WTC11 (cell line): ENCODE measurements at regions of chr9 and their contacts with region 1.

Region 1: DNA sequence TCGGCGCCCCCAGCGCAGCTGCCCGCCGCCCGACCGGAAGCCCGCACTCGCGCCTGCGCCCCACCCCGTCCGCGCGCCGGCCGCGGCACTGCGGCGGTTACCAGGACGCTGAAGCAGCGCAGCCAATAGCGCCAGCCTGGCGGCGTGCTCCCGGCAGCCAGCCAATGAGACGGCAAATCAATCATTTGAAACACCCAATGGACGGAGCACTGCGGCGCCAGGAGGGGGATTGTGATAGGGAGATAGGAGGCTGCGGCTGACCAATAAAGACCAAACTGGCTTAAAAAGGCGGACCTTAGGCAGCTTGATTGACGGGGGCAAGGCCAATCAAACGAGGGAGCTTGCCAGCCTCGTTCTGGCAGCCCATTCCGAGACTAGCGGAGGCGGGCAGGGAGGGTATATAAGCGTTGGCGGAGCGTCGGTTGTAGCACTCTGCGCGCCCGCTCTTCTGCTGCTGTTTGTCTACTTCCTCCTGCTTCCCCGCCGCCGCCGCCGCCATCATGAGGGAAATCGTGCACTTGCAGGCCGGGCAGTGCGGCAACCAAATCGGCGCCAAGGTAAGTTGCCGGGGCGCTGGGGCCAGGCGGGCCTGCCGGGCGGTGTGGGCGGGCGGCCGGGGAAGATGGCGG is at the start of gene TUBB4B:
- DNase-seq: peak; percentile 98
- ATAC-seq: peak; percentile 80
- H3K4me3 Mint-ChIP-seq: peak within 1 kb of the TSS; percentile 81
- H3K27ac Mint-ChIP-seq: peak within 1 kb of the TSS; percentile 87; the same call in 1 of the 2 replicates
- H3K4me1 Mint-ChIP-seq: peaks cover 39% of the 10 kb centered on the region
- H3K27me3 Mint-ChIP-seq: no peaks in the 10 kb centered on the region
- CTCF ChIP-seq: no peak
- total RNA-seq, gene TUBB4B: 373 to 376 TPM (median 375 TPM) in 3 replicates

Region 2: DNA sequence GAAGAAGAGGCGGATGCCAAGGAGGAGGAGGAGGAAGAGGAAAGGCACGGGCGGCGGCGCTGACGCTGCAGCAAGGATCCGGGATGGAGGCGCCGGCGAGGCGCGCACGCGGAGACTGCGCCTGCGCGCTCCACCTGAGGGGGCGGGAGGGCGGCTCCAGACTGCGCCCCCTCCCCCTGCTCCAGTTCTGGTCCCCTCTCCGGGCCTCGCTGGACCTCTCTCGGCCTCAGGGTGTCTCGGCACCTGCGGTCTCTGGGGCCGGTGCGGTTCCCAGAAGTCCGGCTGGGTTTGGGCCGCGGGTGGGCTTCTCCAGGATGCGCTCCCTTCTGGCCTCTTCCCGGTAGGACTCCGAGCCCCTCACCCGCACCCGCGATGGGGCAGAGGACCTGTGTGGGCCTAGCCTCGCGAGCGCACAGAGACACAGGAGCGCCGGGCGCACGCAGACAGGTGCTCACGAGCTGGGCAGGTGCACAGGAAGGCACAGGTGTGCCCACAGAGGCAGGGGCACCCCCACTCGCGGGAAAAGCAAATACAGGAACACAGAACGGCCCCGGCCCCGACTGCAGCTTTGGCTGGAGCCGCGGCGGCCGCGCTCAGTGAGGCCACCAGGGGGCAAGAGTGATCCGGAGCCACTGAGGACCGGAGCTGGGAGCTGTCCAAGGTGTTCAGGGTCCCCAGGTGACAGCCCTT is 194.7 kb before region 1 on chr9 and contains the start of gene NPDC1:
- CTCF ChIA-PET with region 1: interaction called, 17 read pairs
- POLR2A ChIA-PET with region 1: no interaction called
- DNase-seq: peak; percentile 94
- ATAC-seq: peak; percentile 69
- H3K4me3 Mint-ChIP-seq: peak within 1 kb of the TSS; percentile 77
- H3K27ac Mint-ChIP-seq: no peak within 1 kb of the TSS
- H3K4me1 Mint-ChIP-seq: peaks cover 10% of the 10 kb centered on the region
- H3K27me3 Mint-ChIP-seq: peaks cover 47% of the 10 kb centered on the region
- CTCF ChIP-seq: peak; percentile 83
- total RNA-seq, gene NPDC1: 64.3 to 68.8 TPM (median 64.5 TPM) in 3 replicates

Region 3: DNA sequence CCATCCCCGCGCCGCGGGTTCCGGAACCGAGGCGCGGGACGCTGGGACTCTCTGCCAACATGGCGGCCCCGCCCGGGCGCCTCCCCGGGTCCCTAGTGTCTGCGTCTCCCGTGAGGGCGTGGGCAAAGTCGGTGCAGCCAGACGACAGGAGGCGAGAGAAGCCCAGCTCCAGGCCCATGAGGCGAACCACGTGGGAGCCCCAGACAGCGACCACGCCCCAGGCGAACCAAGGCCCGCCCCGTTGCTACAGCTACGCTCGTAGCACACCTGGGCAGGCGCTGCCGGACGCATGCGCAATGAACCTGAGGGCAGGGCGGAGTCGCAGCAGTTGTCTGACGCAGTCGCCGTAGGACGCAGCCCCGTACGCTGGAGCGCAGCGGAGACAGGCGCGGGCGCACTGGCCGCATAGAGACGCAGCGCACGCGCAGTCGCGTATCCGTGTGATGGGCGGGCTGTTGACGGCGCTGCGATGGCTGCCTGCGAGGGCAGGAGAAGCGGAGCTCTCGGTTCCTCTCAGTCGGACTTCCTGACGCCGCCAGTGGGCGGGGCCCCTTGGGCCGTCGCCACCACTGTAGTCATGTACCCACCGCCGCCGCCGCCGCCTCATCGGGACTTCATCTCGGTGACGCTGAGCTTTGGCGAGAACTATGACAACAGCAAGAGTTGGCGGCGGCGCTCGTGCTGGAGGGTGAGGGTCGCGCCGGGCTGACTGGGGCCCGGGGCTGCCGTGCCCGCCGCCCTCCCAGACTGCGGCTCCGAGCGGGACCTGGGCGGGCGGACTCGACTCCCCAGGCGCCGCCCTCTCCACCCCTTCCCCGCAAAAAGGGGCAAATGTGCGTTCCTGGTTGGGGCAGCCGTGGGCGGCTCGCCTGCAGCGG is 154.2 kb before region 1 on chr9 and contains the start of gene MAN1B1:
- CTCF ChIA-PET with region 1: interaction called, 25 read pairs
- POLR2A ChIA-PET with region 1: interaction called, 5 read pairs
- DNase-seq: peak; percentile 99
- ATAC-seq: peak; percentile 95
- H3K4me3 Mint-ChIP-seq: peak within 1 kb of the TSS; percentile 85
- H3K27ac Mint-ChIP-seq: peak within 1 kb of the TSS; percentile 91
- H3K4me1 Mint-ChIP-seq: peaks cover 16% of the 10 kb centered on the region
- H3K27me3 Mint-ChIP-seq: peaks cover 9% of the 10 kb centered on the region
- CTCF ChIP-seq: no peak
- total RNA-seq, gene MAN1B1: 44.9 to 57.1 TPM (median 47.1 TPM) in 3 replicates

Region 4: DNA sequence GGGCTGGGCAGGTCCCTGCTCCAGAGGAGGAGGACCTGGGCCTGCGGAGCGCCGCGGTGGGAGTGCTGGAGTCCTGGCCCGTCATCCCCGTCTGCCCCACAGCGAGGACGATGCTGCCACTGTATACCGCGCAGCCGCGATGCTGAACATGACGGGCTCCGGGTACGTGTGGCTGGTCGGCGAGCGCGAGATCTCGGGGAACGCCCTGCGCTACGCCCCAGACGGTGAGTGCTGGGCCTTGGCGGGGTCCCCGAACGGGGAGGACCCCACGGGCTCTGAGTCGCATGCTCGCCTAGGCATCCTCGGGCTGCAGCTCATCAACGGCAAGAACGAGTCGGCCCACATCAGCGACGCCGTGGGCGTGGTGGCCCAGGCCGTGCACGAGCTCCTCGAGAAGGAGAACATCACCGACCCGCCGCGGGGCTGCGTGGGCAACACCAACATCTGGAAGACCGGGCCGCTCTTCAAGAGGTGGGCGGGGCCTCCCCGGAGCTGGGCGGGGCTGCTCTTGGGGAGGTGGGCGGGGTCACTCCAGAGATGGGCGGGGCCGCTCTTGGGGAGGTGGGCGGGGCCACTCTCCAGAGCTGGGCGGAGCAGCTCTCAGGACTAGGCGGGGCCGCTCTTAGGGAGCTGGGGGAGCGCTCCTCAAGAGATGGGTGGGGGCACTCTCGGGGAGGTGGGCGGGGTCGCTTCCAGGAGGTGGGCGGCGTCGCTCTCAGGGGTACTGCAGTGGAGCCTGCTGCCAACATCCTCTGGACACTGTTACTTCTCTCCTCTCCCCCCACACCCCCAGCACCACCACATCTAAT is 84.2 kb before region 1 on chr9:
- CTCF ChIA-PET with region 1: interaction called, 18 read pairs
- POLR2A ChIA-PET with region 1: no interaction called
- DNase-seq: peak; percentile 75
- ATAC-seq: peak; percentile 72
- H3K4me3 Mint-ChIP-seq: peak overlapping the region; percentile 64
- H3K27ac Mint-ChIP-seq: no peak overlapping the region
- H3K4me1 Mint-ChIP-seq: no peaks in the 10 kb centered on the region
- H3K27me3 Mint-ChIP-seq: peaks cover 66% of the 10 kb centered on the region
- CTCF ChIP-seq: no peak

Region 5: GRCh38 chr9:137176302-137177182 is 64.4 kb before region 1 on chr9:
- CTCF ChIA-PET with region 1: interaction called, 33 read pairs
- POLR2A ChIA-PET with region 1: no interaction called
- DNase-seq: peak; percentile 48
- ATAC-seq: peak; percentile 60
- H3K4me3 Mint-ChIP-seq: no peak overlapping the region
- H3K27ac Mint-ChIP-seq: peak overlapping the region; percentile 49
- H3K4me1 Mint-ChIP-seq: no peaks in the 10 kb centered on the region
- H3K27me3 Mint-ChIP-seq: peaks cover 5% of the 10 kb centered on the region
- CTCF ChIP-seq: peak; percentile 21; the same call in 1 of the 2 replicates

Region 6: GRCh38 chr9:137213160-137214060 is 27.6 kb before region 1 on chr9:
- CTCF ChIA-PET with region 1: interaction called, 10 read pairs
- POLR2A ChIA-PET with region 1: no interaction called
- DNase-seq: no peak
- ATAC-seq: no peak
- H3K4me3 Mint-ChIP-seq: no peak overlapping the region
- H3K27ac Mint-ChIP-seq: no peak overlapping the region
- H3K4me1 Mint-ChIP-seq: peaks cover 4% of the 10 kb centered on the region; the same call in 1 of the 2 replicates
- H3K27me3 Mint-ChIP-seq: no peaks in the 10 kb centered on the region
- CTCF ChIP-seq: no peak

Region 7: GRCh38 chr9:137262909-137263285 is 21.9 kb after region 1 on chr9:
- CTCF ChIA-PET with region 1: interaction called, 18 read pairs
- POLR2A ChIA-PET with region 1: interaction called, 3 read pairs
- DNase-seq: no peak
- ATAC-seq: no peak
- H3K4me3 Mint-ChIP-seq: no peak overlapping the region
- H3K27ac Mint-ChIP-seq: no peak overlapping the region
- H3K4me1 Mint-ChIP-seq: peaks cover 3% of the 10 kb centered on the region; the same call in 1 of the 2 replicates
- H3K27me3 Mint-ChIP-seq: no peaks in the 10 kb centered on the region
- CTCF ChIP-seq: no peak